ENCODE measurements at regions of chr2 and their contacts with region 1.

Region 1: DNA sequence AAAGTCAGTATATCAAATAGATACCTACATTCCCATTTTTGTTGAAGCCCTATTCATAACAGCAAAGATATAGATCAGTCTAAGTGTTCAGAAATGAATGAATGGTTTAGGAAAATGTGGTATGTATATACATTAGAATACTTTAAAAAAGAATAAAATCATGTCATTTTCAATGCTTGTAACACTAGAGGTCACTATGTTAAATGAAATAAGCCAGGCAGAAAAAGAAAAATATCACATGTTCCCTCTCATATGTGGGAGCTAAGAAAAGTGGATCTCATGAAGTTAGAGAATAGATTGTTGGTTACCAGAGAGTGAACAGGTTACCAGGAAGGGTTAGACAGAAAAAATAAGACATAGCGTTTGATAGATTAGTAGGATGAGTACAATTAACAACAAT is 1111.0 kb upstream of the SLC39A10 start:
- DNase-seq: no peak
- H3K4me3 ChIP-seq: no peak overlapping the region
- H3K27ac ChIP-seq: no peak overlapping the region
- H3K27me3 ChIP-seq: no peaks in the 10 kb centered on the region
- CTCF ChIP-seq: peak in 51 of 56 donors; percentile 19 to 67 (median 43)

Region 2: DNA sequence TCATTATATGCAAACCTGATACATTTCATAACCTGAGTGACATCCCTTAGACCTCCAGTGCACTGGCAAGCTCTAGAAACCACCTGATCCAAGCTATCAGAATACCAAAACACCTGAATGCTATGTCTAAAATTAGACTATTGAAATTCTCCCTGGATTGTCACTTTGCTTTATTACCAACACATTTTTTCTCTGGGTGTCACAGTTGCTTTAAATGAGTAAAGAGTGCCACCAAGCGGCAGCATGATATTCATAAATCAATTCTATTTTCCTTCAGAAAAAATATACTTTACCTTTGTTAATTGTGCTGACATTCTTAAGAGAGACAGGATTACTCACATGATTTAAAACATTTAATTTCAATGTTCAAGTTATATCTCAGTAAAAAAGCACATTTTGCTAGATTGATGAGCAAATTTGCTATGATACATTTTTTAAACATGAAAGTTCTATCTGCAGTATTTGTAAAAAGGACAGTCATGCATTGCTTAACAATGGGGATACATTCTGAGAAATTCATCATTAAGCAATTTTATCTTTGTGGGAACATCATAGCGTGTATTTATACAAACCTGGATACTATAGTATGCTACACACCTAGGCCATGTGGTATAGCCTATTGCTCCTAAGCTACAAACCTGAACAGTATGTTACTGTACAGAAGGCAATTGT is 772.6 kb after region 1 on chr2:
- intact Hi-C with region 1: loop called in 1 of 2 experiments (anchors 5 kb)
- DNase-seq: peak in 3 of 10 donors; percentile 8 to 51 (median 8)
- H3K4me3 ChIP-seq: no peak overlapping the region
- H3K27ac ChIP-seq: no peak overlapping the region
- H3K27me3 ChIP-seq: no peaks in the 10 kb centered on the region
- CTCF ChIP-seq: peak; percentile 34 to 92 (median 73)